PC-3 (cell line): ENCODE measurements at regions of chr3 and their contacts with region 1.

Region 1: GRCh38 chr3:153221748-153222162 is 59.7 kb downstream of the RAP2B start:
- DNase-seq: peak; percentile 97
- ATAC-seq: peak; percentile 96
- H3K4me3 ChIP-seq: peak overlapping the region; percentile 13; the same call in 1 of the 2 replicates
- H3K27ac ChIP-seq: peak overlapping the region; percentile 89
- H3K4me1 ChIP-seq: peaks cover 24% of the 10 kb centered on the region
- H3K27me3 ChIP-seq: no peaks in the 10 kb centered on the region
- CTCF ChIP-seq: no peak

Region 2: GRCh38 chr3:152430223-152431002 is 791.3 kb before region 1 on chr3:
- CTCF ChIA-PET with region 1: no interaction called
- POLR2A ChIA-PET with region 1: no interaction called
- intact Hi-C with region 1: no loop called
- DNase-seq: no peak
- ATAC-seq: 0 out of 2 replicates have a peak, but pooled peaks have one; percentile 22
- H3K4me3 ChIP-seq: no peak overlapping the region
- H3K27ac ChIP-seq: no peak overlapping the region
- H3K4me1 ChIP-seq: 0 out of 2 replicates have a peak, but pooled peaks cover 8% of the 10 kb centered on the region
- H3K27me3 ChIP-seq: no peaks in the 10 kb centered on the region
- CTCF ChIP-seq: no peak

Region 3: GRCh38 chr3:153257673-153258351 is 36.1 kb after region 1 on chr3:
- CTCF ChIA-PET with region 1: no interaction called
- POLR2A ChIA-PET with region 1: no interaction called
- intact Hi-C with region 1: loop called (anchors 5 kb)
- DNase-seq: peak; percentile 85
- ATAC-seq: peak; percentile 81
- H3K4me3 ChIP-seq: no peak overlapping the region
- H3K27ac ChIP-seq: peak overlapping the region; percentile 81
- H3K4me1 ChIP-seq: peaks cover 38% of the 10 kb centered on the region
- H3K27me3 ChIP-seq: no peaks in the 10 kb centered on the region
- CTCF ChIP-seq: no peak

Region 4: DNA sequence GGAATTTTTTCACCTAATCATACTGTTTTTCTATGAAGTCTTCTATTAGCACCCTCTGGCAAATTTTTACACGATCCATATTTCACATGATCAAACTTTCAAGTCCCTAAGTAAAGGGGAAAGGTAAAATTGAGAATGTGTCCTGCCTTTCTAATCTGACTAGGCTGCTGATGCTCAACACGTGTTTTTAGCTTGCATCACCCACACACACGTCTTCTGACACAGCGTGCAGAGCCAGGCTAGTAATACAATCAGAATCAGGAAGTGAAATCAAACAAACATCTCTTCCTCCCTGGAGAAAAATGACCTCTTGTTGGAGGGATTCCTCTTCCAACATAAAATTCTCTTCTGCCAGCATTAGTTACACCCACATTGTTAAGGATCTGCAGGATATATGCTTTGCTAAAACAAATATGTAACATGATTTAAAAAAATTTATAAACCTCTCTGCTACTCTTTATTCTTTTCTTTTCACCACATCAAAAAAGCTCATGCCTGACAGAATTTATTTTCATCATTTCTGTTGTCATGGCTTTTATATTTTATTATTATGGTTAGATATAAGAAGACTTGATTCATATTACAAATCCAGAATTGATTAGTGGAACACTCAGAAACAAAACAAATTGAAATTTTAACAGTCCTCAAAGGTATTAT is 62.7 kb after region 1 on chr3:
- CTCF ChIA-PET with region 1: interaction called, 3 read pairs
- POLR2A ChIA-PET with region 1: no interaction called
- intact Hi-C with region 1: loop called (anchors 1 kb)
- DNase-seq: peak; percentile 78
- ATAC-seq: peak; percentile 87
- H3K4me3 ChIP-seq: no peak overlapping the region
- H3K27ac ChIP-seq: peak overlapping the region; percentile 46
- H3K4me1 ChIP-seq: peaks cover 42% of the 10 kb centered on the region
- H3K27me3 ChIP-seq: no peaks in the 10 kb centered on the region
- CTCF ChIP-seq: no peak

Region 5: GRCh38 chr3:153291056-153291685 is 69.4 kb after region 1 on chr3:
- CTCF ChIA-PET with region 1: interaction called, 4 read pairs
- POLR2A ChIA-PET with region 1: interaction called, 4 read pairs
- intact Hi-C with region 1: loop called (anchors 1 kb)
- DNase-seq: peak; percentile 69
- ATAC-seq: peak; percentile 80
- H3K4me3 ChIP-seq: no peak overlapping the region
- H3K27ac ChIP-seq: no peak overlapping the region
- H3K4me1 ChIP-seq: peaks cover 33% of the 10 kb centered on the region
- H3K27me3 ChIP-seq: no peaks in the 10 kb centered on the region
- CTCF ChIP-seq: peak; percentile 85